Activated CD8-positive, alpha-beta T cell treated with anti-CD3 and anti-CD28 coated beads, Interleukin-2, amount 10 ng/mL, durations not matched to agents 7 days and 5 days (primary cell): ENCODE measurements at regions of chr3 and their contacts with region 1.

Region 1: DNA sequence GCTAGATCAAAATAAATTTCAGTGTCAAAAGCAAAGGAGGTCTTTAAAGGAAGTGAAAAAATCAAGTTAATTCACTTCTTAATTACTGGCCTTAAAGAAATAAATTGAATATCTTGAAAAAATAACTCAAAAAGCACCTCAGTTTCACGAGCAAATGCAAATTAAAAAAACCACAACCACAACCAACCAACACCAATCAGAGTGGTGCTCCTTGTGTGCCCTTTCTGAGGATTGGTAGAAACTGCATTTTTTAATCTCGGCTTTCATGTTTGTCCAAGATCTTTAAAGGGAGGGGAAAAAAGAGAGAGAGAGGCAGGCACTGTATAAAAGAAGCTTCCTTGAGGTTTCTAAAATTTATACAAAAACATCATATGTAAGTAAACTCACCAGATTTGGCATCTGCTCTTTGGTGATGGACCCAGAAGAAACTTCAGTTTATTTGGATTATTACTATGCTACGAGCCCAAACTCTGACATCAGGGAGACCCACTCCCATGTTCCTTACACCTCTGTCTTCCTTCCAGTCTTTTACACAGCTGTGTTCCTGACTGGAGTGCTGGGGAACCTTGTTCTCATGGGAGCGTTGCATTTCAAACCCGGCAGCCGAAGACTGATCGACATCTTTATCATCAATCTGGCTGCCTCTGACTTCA is at the start of gene GPR15:
- DNase-seq: no peak
- ATAC-seq: peak; percentile 43
- H3K4me3 Mint-ChIP-seq: peak within 1 kb of the TSS; percentile 57
- H3K27ac Mint-ChIP-seq: peak within 1 kb of the TSS; percentile 74
- H3K4me1 Mint-ChIP-seq: peaks cover 57% of the 10 kb centered on the region
- H3K27me3 Mint-ChIP-seq: no peaks in the 10 kb centered on the region
- total RNA-seq, gene GPR15: 18.9 to 19.7 TPM

Region 2: DNA sequence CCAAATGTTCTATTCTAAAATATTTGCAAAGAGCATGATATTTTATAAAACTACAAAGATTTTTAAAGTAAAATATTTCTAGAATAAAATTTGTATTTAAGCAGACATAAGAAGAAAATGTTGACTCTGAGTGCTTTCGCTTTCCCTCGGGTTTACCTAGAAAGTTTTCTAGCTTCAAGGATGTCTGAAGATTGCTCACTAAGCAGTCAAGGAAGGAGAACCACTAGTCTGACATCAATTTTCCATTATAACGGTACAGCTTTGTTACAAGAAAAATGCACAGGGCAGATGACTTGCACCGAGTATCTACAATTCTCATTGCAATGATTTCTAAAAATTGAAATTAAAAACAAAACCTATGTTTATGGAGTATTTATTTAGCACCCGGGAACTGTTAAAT is 14.2 kb after region 1 on chr3:
- CTCF ChIA-PET with region 1: interaction called, 7 read pairs
- POLR2A ChIA-PET with region 1: interaction called, 217 read pairs
- DNase-seq: no peak
- ATAC-seq: peak; percentile 78
- H3K4me3 Mint-ChIP-seq: peak overlapping the region; percentile 66
- H3K27ac Mint-ChIP-seq: peak overlapping the region; percentile 88
- H3K4me1 Mint-ChIP-seq: peaks cover 76% of the 10 kb centered on the region
- H3K27me3 Mint-ChIP-seq: no peaks in the 10 kb centered on the region

Region 3: DNA sequence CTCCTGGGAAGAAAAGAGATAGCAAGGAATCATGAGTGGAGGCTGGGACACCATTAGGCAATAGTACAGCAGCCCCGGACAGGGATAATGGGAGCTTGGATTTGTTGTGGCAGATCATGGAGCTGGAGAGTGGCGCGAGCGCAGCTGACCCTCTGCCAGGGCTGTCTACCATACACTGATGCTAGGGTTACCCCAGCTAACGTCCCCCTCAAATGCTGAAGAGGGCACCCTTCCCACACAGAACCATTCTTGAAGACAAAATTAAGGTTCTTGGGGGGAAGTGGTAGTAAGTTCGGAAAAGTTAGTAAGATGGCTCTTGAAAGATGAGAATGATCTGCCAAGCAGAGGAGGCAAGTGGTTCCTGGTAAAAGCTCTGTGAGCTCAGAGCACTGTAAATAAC is 292.5 kb after region 1 on chr3:
- CTCF ChIA-PET with region 1: no interaction called
- POLR2A ChIA-PET with region 1: no interaction called
- DNase-seq: no peak
- ATAC-seq: no peak
- H3K4me3 Mint-ChIP-seq: no peak overlapping the region
- H3K27ac Mint-ChIP-seq: no peak overlapping the region
- H3K4me1 Mint-ChIP-seq: no peaks in the 10 kb centered on the region
- H3K27me3 Mint-ChIP-seq: no peaks in the 10 kb centered on the region